Common myeloid progenitor, CD34-positive (primary cell): ENCODE measurements at regions of chr10 and their contacts with region 1.

Region 1: GRCh38 chr10:6667679-6668270 is 87.7 kb upstream of the PRKCQ start:
- DNase-seq: peak; percentile 71 to 72 (median 72)
- H3K4me3 ChIP-seq: no peak overlapping the region
- H3K27ac ChIP-seq: no peak overlapping the region
- H3K4me1 ChIP-seq: peaks cover 3 to 19% (median 8%) of the 10 kb centered on the region in 4 experiments
- H3K27me3 ChIP-seq: no peaks in the 10 kb centered on the region

Region 2: GRCh38 chr10:6409971-6410651 is 257.7 kb before region 1 on chr10:
- CTCF ChIA-PET with region 1: interaction called, 16 read pairs
- POLR2A ChIA-PET with region 1: no interaction called
- DNase-seq: peak; percentile 17 to 77 (median 69)
- H3K4me3 ChIP-seq: peak overlapping the region in 1 of 7 experiments; percentile 20
- H3K27ac ChIP-seq: peak overlapping the region in 1 of 2 experiments; percentile 29
- H3K4me1 ChIP-seq: peaks cover 4 to 10% (median 8%) of the 10 kb centered on the region in 4 experiments
- H3K27me3 ChIP-seq: no peaks in the 10 kb centered on the region

Region 3: GRCh38 chr10:6416892-6417512 is 250.8 kb before region 1 on chr10:
- CTCF ChIA-PET with region 1: interaction called, 16 read pairs
- POLR2A ChIA-PET with region 1: no interaction called
- DNase-seq: peak; percentile 59 to 68 (median 59)
- H3K4me3 ChIP-seq: no peak overlapping the region
- H3K27ac ChIP-seq: no peak overlapping the region
- H3K4me1 ChIP-seq: no peaks in the 10 kb centered on the region
- H3K27me3 ChIP-seq: no peaks in the 10 kb centered on the region

Region 4: GRCh38 chr10:6445501-6446316 is 222.1 kb before region 1 on chr10:
- CTCF ChIA-PET with region 1: interaction called, 20 read pairs
- POLR2A ChIA-PET with region 1: no interaction called
- DNase-seq: peak; percentile 67 to 78 (median 76)
- H3K4me3 ChIP-seq: peak overlapping the region in 2 of 7 experiments; percentile 36 to 43
- H3K27ac ChIP-seq: peak overlapping the region in 1 of 2 experiments; percentile 64
- H3K4me1 ChIP-seq: peaks cover 0 to 5% (median 2%) of the 10 kb centered on the region in 4 experiments
- H3K27me3 ChIP-seq: no peaks in the 10 kb centered on the region

Region 5: GRCh38 chr10:6580279-6581029 is 87.3 kb before region 1 on chr10:
- CTCF ChIA-PET with region 1: interaction called, 21 read pairs
- POLR2A ChIA-PET with region 1: interaction called, 3 read pairs
- DNase-seq: peak; percentile 82 to 88 (median 87)
- H3K4me3 ChIP-seq: peak overlapping the region; percentile 84 to 99 (median 90)
- H3K27ac ChIP-seq: peak overlapping the region; percentile 72 to 91
- H3K4me1 ChIP-seq: peaks cover 23 to 50% (median 41%) of the 10 kb centered on the region in 4 experiments
- H3K27me3 ChIP-seq: no peaks in the 10 kb centered on the region

Region 6: DNA sequence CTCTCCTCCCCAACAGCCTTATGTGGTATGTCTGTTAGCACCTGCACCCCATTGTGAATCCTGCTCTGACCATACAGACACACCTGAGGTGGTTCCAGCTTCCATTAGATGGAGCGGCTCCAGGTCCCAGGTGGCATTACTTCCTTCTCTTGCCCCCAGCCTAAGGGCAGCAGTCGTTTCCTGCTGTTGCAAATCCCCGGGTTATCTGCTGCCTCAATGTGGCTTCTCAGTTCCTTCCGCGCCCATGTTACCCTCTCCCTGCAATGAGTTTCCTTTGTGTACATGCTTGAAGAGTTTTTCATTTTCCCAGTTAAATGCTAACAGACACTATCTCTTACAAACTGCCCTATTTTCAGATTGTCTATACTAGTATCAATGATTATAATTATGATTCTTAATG is 24.9 kb before region 1 on chr10:
- CTCF ChIA-PET with region 1: interaction called, 12 read pairs
- POLR2A ChIA-PET with region 1: no interaction called
- DNase-seq: peak; percentile 37 to 76 (median 62)
- H3K4me3 ChIP-seq: peak overlapping the region in 1 of 7 experiments; percentile 45
- H3K27ac ChIP-seq: peak overlapping the region in 1 of 2 experiments; percentile 19
- H3K4me1 ChIP-seq: peaks cover 4 to 33% (median 22%) of the 10 kb centered on the region in 4 experiments
- H3K27me3 ChIP-seq: no peaks in the 10 kb centered on the region

Region 7: DNA sequence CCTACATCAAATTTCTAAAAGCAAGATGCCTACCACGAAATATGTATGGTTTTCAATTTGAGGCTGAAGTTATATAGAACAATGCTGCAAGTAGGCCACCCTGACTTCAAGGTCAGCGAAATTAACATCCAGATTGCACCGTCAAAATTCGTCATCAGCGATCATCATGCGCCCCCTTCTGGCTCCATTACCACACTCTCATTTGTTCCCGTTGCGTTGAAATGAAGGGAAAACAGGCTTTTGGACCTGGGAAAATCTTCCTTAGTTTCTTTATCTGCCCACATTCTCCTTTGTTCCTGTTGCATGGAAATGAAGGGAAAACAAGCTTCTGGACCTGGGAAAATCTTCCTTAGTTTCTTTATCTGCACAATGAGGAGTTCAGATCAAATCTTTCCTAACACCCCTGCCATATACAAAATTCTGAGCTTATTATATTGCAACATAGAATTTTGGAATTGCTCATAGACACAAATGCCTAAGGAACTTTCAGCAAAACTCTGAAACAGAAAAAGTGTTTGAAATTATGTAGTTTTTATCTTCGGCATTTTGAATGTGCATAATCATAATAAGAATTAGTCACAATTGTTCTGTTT is 10.5 kb after region 1 on chr10:
- CTCF ChIA-PET with region 1: interaction called, 10 read pairs
- POLR2A ChIA-PET with region 1: no interaction called
- DNase-seq: peak; percentile 60 to 67 (median 64)
- H3K4me3 ChIP-seq: no peak overlapping the region
- H3K27ac ChIP-seq: no peak overlapping the region
- H3K4me1 ChIP-seq: peaks cover 0 to 4% (median 0%) of the 10 kb centered on the region in 4 experiments
- H3K27me3 ChIP-seq: no peaks in the 10 kb centered on the region